HCT116 (cell line): ENCODE measurements at regions of chr5 and their contacts with region 1.

Region 1: DNA sequence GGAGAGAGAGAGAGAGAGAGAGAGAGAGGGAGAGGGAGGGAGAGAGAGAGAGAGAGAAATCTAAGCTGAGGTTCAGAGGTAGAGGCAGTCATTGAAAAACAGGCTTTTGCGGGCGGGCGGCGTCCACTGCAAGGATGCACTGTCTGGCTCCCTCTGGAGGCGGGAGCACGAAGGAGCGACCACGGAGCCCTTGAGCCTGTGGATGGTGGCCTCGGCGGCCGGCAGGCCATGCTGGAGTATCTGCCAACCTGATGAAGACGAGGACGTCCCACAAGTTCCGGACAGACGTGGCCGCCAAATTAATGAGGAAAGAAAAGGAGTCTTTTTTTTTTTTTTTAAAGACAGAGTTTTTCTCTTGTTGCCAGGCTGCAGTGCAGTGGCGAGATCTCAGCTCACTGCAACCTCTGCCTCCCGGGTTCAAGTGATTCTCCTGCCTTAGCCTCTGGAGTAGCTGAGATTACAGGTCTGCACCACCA is 2.2 kb upstream of the CCDC125 start:
- DNase-seq: peak; percentile 57
- ATAC-seq: peak; percentile 85
- H3K4me3 ChIP-seq: no peak overlapping the region
- H3K27ac ChIP-seq: no peak overlapping the region
- H3K4me1 ChIP-seq: peaks cover 9 to 45% of the 10 kb centered on the region in 2 experiments; a peak in 3 of 4 replicates
- H3K27me3 ChIP-seq: no peaks in the 10 kb centered on the region
- CTCF ChIP-seq: peak; percentile 51 to 76 (median 73); a peak in 5 of 6 replicates
- POLR2A ChIP-seq: no peak
- RAD21 ChIP-seq: peak; percentile 80

Region 2: DNA sequence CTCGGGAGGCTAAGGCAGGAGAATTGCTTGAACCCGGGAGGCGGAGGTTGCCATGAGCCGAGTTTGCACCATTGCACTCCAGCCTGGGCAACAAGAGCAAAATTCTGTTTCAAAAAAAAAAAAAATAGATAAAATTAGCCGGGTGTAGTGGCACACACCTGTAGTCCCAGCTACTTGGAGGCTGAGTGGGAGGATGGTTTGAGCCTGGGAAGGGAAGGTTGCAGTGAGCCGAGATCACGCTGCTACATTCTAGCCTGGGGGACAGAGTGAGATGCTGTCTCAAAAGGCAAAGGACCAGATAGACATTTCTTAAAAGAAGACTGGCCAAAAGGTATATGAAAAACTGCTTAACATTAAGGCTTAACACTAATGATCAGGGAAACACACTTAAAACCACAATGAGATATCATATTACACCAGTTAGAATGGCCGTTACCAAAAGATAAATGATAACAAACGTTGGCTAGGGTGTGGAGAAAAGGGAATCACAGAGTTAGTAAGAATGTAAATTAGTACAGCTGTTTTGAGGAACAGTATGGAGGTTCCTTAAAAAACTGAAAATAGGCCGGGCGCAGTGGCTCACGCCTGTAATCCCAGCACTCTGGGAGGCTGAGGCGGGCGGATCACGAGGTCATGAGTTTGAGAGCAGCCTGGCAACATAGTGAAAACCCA is 70.0 kb after region 1 on chr5:
- CTCF ChIA-PET with region 1: interaction called, 3 read pairs
- POLR2A ChIA-PET with region 1: no interaction called
- RAD21 ChIA-PET with region 1: no interaction called
- intact Hi-C with region 1: loop called (anchors 10 kb)
- DNase-seq: no peak
- ATAC-seq: no peak
- H3K4me3 ChIP-seq: no peak overlapping the region
- H3K27ac ChIP-seq: no peak overlapping the region
- H3K4me1 ChIP-seq: no peaks in the 10 kb centered on the region
- H3K27me3 ChIP-seq: no peaks in the 10 kb centered on the region
- CTCF ChIP-seq: no peak
- POLR2A ChIP-seq: no peak
- RAD21 ChIP-seq: no peak